Psoas muscle (tissue), 8 donors: ENCODE measurements at regions of chr2 and their contacts with region 1.

Region 1: GRCh38 chr2:10832203-10832936 is 19.8 kb upstream of the PDIA6 start:
- DNase-seq: peak; percentile 75 to 89
- ATAC-seq: peak; percentile 83 to 92 (median 87)
- H3K4me3 ChIP-seq: no peak overlapping the region
- H3K27ac ChIP-seq: no peak overlapping the region
- H3K4me1 ChIP-seq: no peaks in the 10 kb centered on the region
- H3K27me3 ChIP-seq: peaks cover 0 to 14% (median 2%) of the 10 kb centered on the region in 3 donors
- CTCF ChIP-seq: peak; percentile 98

Region 2: GRCh38 chr2:10877651-10878111 is 45.3 kb after region 1 on chr2:
- intact Hi-C with region 1: loop called (anchors 5 kb)
- DNase-seq: no peak
- ATAC-seq: no peak
- H3K4me3 ChIP-seq: no peak overlapping the region
- H3K27ac ChIP-seq: no peak overlapping the region
- H3K4me1 ChIP-seq: peaks cover 15% of the 10 kb centered on the region
- H3K27me3 ChIP-seq: no peaks in the 10 kb centered on the region
- CTCF ChIP-seq: no peak

Region 3: GRCh38 chr2:10897956-10898355 is 65.6 kb after region 1 on chr2:
- intact Hi-C with region 1: loop called in 1 of 2 experiments (anchors 5 kb)
- DNase-seq: no peak
- ATAC-seq: no peak
- H3K4me3 ChIP-seq: no peak overlapping the region
- H3K27ac ChIP-seq: no peak overlapping the region
- H3K4me1 ChIP-seq: no peaks in the 10 kb centered on the region
- H3K27me3 ChIP-seq: no peaks in the 10 kb centered on the region
- CTCF ChIP-seq: no peak

Region 4: GRCh38 chr2:10909050-10909995 is 77.0 kb after region 1 on chr2:
- intact Hi-C with region 1: loop called (anchors 5 kb)
- DNase-seq: no peak
- ATAC-seq: no peak
- H3K4me3 ChIP-seq: no peak overlapping the region
- H3K27ac ChIP-seq: no peak overlapping the region
- H3K4me1 ChIP-seq: no peaks in the 10 kb centered on the region
- H3K27me3 ChIP-seq: peaks cover 0 to 36% (median 23%) of the 10 kb centered on the region in 3 donors
- CTCF ChIP-seq: no peak

Region 5: DNA sequence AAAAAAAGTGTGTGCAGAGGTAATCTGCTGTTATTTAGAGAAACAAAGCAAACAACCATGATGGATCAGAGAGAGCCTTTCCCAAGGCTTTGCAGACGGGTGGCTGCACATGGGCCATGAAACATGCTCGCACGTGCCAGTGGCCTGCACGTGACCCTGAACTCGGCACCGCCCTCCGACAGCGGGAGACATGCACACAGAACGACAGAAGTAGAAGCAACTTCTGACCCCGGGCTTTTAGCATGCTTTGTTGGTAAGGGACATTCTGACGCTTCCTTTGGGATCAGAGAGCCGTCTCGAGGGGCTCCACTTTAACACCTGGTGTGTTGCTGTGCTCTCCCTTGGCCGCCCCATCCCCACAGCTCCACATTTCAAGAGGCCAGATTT is 191.9 kb after region 1 on chr2:
- intact Hi-C with region 1: loop called (anchors 2 to 10 kb)
- DNase-seq: no peak
- ATAC-seq: no peak
- H3K4me3 ChIP-seq: no peak overlapping the region
- H3K27ac ChIP-seq: no peak overlapping the region
- H3K4me1 ChIP-seq: no peaks in the 10 kb centered on the region
- H3K27me3 ChIP-seq: no peaks in the 10 kb centered on the region
- CTCF ChIP-seq: no peak

Region 6: GRCh38 chr2:11124503-11125068 is 292.2 kb after region 1 on chr2:
- intact Hi-C with region 1: loop called (anchors 1 to 2 kb)
- DNase-seq: peak; percentile 49 to 75
- ATAC-seq: peak; percentile 73 to 90 (median 83)
- H3K4me3 ChIP-seq: no peak overlapping the region
- H3K27ac ChIP-seq: no peak overlapping the region
- H3K4me1 ChIP-seq: peaks cover under 1% of the 10 kb centered on the region
- H3K27me3 ChIP-seq: no peaks in the 10 kb centered on the region
- CTCF ChIP-seq: peak; percentile 70

Region 7: DNA sequence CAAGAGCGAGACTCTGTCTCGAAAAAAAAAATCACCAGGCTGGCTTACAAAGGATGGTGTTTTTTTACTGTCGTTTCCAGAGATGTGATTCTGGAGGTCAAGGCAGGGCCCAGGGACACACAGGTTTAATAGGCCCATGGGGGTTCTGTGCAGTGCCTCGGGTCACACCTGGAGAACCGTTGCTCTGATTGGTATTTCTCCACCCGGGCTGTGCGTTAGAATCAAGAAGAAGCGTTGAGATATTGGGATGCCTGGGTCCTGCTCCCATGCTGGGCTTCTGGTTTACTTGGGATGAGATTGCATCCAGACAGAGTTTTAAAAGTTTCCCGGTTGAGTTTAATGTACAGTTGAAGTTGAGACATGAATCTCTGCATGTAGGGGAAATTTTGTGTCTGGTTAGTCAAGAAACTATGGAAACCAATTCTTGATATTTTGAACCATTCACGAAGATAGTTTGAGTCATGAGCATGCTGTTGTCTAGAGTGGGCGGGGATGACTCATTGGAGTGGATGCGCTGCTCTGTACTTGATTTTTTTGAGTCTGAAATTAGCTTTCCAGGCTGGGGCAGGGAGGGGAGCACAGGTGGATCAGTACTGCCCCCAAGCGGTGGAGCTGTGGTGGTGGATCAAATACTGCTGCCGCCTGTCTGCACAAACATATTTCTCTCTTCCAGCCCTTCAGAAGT is 751.6 kb after region 1 on chr2:
- intact Hi-C with region 1: loop called in 1 of 2 experiments (anchors 10 kb)
- DNase-seq: peak; percentile 72 to 84
- ATAC-seq: peak; percentile 72 to 79 (median 76)
- H3K4me3 ChIP-seq: no peak overlapping the region
- H3K27ac ChIP-seq: peak overlapping the region; percentile 58
- H3K4me1 ChIP-seq: peaks cover 7% of the 10 kb centered on the region
- H3K27me3 ChIP-seq: no peaks in the 10 kb centered on the region
- CTCF ChIP-seq: peak; percentile 87